PC-3 (cell line): ENCODE measurements at regions of chr4 and their contacts with region 1.

Region 1: GRCh38 chr4:173386751-173387150 is 12.2 kb downstream of the SCRG1 start:
- DNase-seq: peak; percentile 23
- ATAC-seq: peak; percentile 66
- H3K4me3 ChIP-seq: no peak overlapping the region
- H3K27ac ChIP-seq: no peak overlapping the region
- H3K4me1 ChIP-seq: peaks cover 5% of the 10 kb centered on the region
- H3K27me3 ChIP-seq: no peaks in the 10 kb centered on the region
- CTCF ChIP-seq: no peak

Region 2: DNA sequence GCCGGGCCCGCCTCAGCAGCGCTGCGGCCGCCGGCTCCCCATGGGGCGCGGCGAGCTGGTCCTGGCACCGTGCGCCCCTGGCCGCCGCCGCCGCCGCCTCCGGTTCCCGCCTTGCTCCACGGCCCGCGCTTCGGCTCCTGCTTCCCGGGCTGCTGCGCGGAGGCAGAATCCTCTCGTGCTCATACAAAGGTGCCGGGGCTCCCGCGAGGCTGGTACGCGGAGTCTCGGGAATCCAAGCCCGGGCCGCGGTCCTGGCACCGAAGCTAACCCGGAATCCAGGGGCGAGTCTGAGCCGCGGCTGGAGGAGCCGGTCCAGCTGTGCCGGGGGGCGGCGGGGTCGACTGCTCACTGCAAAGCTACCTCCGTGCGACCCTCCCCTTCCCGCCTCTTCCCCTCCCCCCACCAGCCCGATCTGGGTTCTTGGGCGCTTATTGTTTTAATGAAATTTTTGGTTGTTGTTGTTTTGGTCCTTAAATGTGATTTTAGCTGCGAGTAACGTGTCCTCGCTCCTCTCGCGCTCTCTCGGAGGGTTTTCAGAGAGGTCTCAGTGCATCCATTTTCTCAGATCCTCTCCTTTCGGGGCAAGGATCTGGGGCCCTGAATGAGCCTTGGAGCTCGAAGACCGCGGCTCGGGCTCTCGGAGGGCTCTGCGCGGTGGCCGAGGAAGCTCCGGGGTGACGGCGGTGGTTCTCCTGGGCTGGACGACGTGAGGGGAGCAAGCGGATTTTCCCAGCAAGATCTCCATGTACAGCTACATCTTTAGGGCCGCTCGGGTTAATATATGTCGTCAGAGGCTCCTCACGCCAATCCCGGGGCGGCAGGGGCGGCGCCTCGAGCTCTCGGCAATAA is 142.9 kb after region 1 on chr4 and contains the start of gene HAND2:
- CTCF ChIA-PET with region 1: interaction called, 12 read pairs
- POLR2A ChIA-PET with region 1: no interaction called
- intact Hi-C with region 1: no loop called
- DNase-seq: no peak
- ATAC-seq: no peak
- H3K4me3 ChIP-seq: no peak within 1 kb of the TSS
- H3K27ac ChIP-seq: no peak within 1 kb of the TSS
- H3K4me1 ChIP-seq: no peaks in the 10 kb centered on the region
- H3K27me3 ChIP-seq: peaks cover 82% of the 10 kb centered on the region
- CTCF ChIP-seq: no peak
- total RNA-seq, gene HAND2: not detected in 2 replicates